Head of caudate nucleus (tissue), 42 donors: ENCODE measurements at regions of chr13 and their contacts with region 1.

Region 1: DNA sequence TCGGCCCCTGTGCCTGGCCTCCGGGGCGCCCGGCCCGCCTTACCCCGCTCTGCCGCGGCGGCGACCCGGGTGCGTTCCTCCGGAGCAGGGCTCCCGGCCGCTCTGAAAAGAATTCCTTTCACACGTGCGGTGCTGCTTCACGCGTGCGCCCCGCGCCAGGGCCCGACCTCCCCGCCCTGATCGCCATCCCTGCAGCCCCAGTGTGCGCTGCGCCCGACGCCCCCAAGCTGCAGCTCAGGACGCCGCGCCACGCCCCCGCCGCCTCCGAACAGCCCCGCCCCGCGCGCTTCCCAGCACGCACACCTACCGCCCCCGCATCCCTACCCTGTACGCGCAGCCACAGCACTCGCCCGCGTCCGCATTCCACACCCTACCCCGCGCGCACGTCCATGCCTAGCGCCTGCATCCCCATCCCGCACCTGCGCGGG is at the start of gene GJA3:
- DNase-seq: peak in 39 of 42 donors; percentile 32 to 80 (median 62)

Region 2: DNA sequence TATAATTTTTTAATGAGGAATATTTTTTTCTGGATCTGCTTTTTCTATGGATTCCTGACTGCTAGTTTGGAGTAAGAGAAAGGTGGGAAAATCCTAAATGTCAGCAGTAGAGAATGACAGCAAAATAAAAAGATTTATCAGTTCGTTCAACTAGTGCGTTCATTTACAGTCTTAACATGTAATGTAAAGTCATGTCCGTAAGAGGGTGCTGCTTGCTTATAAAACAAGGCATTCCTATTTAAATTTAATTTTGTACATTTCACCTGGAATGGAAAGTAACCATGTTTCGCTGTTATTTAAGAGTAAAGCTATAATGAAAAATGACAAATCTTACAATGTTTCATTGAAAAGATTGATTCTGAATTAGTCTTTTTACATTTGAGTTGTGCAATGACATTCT is 125.7 kb before region 1 on chr13:
- intact Hi-C with region 1: loop called (anchors 10 kb)
- DNase-seq: no peak

Region 3: DNA sequence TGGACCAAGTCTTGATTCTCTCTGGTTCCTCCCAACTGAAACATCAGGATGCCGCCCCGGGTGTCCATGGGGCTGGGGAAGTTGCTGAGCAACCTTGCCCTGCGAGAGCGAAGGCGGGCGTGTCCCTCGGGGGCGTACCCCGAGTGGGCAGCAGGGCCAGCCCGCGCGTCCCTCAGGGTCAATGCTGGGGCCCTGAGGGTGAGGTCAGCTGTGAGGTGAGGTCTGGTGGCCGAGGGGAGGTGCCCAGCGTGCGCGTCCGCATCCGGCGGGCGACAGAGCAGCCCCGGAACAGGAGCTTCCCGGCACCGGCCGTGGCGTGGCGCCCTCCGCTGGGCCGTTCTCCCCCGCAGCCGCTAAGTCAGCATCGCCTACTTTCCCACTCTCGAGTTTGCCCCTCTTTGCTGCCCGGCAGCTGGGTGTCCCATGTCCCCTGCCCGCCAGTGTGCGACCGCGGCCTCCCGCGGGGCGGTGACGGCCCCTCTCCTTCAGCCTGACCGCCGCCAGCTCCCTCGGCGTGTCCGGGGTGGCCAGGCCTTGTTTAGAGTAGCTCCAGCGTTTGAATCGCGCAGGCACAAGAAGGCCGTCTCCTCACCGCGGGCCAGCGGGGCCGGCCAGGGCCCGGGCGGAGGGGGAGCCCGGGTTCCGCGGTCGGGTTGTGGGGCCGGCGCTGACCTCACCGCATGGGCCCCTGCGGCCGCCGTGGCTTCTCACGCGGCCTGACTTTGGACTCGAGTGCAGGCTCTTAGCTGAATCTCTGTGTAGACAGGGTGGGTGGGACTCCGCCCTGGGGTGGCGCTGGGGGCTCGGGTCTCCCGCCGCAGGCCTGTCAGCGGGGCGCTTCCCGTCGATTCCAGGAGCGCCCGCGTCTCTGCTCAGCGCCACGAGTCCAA is 33.0 kb before region 1 on chr13:
- intact Hi-C with region 1: loop called (anchors 5 kb)
- DNase-seq: peak; percentile 35 to 90 (median 72)

Region 4: GRCh38 chr13:20425819-20426219 is 265.0 kb after region 1 on chr13:
- intact Hi-C with region 1: no loop called
- DNase-seq: peak in 2 of 42 donors; percentile 13 to 38